HepG2 (cell line): ENCODE measurements at regions of chrX and their contacts with region 1.

Region 1: DNA sequence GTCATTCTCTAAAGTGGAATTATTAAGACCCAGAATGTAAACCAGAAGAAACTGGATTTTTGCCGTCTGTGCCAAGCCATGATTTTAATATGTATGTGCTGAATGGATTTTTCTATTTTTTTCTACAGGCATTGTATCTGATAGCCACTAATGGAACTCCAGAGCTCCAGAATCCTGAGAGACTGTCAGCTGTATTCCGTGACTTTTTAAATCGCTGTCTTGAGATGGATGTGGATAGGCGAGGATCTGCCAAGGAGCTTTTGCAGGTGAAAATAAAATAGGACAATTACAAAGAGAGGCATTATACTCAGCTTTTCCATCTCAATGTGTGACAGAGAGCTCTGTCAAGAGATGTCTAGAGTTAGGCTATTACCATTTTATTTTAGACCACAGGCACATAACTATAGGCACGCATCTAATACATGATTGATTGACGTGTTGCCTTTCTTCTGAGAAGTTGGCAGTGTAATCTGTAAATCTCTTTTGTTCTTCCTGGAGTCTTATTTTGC is 53.9 kb downstream of the CAPN6 start:
- DNase-seq: no peak
- ATAC-seq: no peak
- H3K4me3 ChIP-seq: no peak overlapping the region
- H3K27ac ChIP-seq: no peak overlapping the region
- H3K4me1 ChIP-seq: no peaks in the 10 kb centered on the region
- H3K27me3 ChIP-seq: no peaks in the 10 kb centered on the region
- CTCF ChIP-seq: no peak
- EP300 ChIP-seq: no peak
- POLR2A ChIP-seq: no peak
- RAD21 ChIP-seq: no peak

Region 2: GRCh38 chrX:111164728-111165127 is 51.6 kb before region 1 on chrX:
- CTCF ChIA-PET with region 1: no interaction called
- POLR2A ChIA-PET with region 1: no interaction called
- in situ Hi-C with region 1: no loop called
- intact Hi-C with region 1: no loop called
- DNase-seq: no peak
- ATAC-seq: no peak
- H3K4me3 ChIP-seq: no peak overlapping the region
- H3K27ac ChIP-seq: no peak overlapping the region
- H3K4me1 ChIP-seq: no peaks in the 10 kb centered on the region
- H3K27me3 ChIP-seq: no peaks in the 10 kb centered on the region
- CTCF ChIP-seq: no peak
- EP300 ChIP-seq: no peak
- POLR2A ChIP-seq: no peak
- RAD21 ChIP-seq: no peak

Region 3: GRCh38 chrX:111360839-111361238 is 144.5 kb after region 1 on chrX:
- CTCF ChIA-PET with region 1: no interaction called
- POLR2A ChIA-PET with region 1: no interaction called
- in situ Hi-C with region 1: no loop called
- intact Hi-C with region 1: no loop called
- DNase-seq: no peak
- ATAC-seq: no peak
- H3K4me3 ChIP-seq: no peak overlapping the region
- H3K27ac ChIP-seq: no peak overlapping the region
- H3K4me1 ChIP-seq: no peaks in the 10 kb centered on the region
- H3K27me3 ChIP-seq: no peaks in the 10 kb centered on the region
- CTCF ChIP-seq: no peak
- EP300 ChIP-seq: no peak
- POLR2A ChIP-seq: no peak
- RAD21 ChIP-seq: no peak

Region 4: DNA sequence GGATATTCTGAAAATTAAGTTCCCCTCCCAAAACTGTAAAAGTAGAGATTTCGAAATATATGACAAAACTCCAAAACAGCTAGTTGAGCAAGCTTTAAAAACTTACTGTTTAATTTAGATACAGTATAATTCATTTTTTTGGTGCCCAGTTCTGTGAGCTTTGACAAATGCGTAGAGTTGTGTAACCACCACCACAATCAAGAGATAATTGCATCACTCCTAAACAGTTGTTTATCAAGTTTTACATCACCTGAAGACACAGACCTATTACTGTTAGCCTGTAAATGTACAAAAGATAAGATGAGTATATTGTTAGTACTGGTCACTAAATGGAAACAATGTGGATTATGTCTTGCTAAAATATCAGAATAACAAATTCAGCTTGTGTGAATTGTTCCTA is 527.0 kb after region 1 on chrX:
- CTCF ChIA-PET with region 1: no interaction called
- POLR2A ChIA-PET with region 1: no interaction called
- in situ Hi-C with region 1: no loop called
- intact Hi-C with region 1: loop called (anchors 5 kb)
- DNase-seq: no peak
- ATAC-seq: no peak
- H3K4me3 ChIP-seq: no peak overlapping the region
- H3K27ac ChIP-seq: no peak overlapping the region
- H3K4me1 ChIP-seq: no peaks in the 10 kb centered on the region
- H3K27me3 ChIP-seq: no peaks in the 10 kb centered on the region
- CTCF ChIP-seq: no peak
- EP300 ChIP-seq: no peak
- POLR2A ChIP-seq: no peak
- RAD21 ChIP-seq: no peak